Activated CD8-positive, alpha-beta T cell treated with anti-CD3 and anti-CD28 coated beads for 36 hours (primary cell): ENCODE measurements at regions of chr6 and their contacts with region 1.

Region 1: DNA sequence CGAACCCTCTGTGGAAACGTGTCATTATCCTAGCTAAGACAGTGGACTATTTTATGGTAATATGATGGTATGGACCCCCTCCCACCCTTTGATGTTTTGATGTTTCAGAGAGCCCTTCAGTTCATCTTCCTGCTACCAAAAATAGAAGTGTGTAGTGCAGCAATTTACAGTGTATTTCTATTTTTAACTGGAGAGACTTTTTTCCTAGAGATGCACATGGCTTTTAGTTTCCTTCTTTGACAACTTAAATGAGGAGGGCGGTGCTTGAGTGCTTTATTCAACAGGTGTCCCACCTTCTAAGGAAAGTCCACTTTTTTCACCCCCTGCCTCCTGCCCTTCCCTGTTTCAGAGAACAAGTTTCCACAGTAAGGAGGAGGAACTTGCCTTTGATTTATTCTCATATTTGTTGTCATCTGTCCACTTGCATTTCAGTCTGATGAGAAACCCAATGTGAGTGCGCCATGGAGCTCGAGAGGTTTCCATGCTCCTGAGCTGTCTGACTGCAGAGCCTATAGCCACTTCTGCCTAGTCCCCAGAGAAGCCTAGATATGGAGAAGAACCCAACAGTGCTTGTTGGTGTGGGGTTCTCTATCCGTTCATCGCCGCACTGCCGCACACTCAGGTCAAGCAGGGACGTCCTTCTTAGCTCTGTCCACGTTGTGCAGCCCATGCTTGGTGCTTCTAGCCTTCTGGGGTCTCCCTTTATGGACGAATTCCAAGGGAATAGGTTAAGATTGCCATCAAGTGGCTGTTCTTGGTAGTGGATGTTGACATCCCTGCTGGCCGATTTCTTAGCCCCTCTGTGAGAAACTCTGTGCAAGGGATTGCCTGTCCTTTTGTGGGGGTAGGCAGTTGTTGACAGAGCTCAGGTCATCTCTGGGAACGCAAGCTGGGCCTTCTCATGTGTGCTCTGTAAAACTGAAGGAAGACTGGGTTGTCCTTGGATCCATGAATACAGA is 144.2 kb downstream of the JARID2 start:
- DNase-seq: peak; percentile 44
- ATAC-seq: peak; percentile 27
- H3K4me3 Mint-ChIP-seq: peak overlapping the region; percentile 22
- H3K27ac Mint-ChIP-seq: peak overlapping the region; percentile 65
- H3K4me1 Mint-ChIP-seq: peaks cover 74% of the 10 kb centered on the region
- H3K27me3 Mint-ChIP-seq: no peaks in the 10 kb centered on the region
- CTCF ChIP-seq: peak; percentile 54

Region 2: DNA sequence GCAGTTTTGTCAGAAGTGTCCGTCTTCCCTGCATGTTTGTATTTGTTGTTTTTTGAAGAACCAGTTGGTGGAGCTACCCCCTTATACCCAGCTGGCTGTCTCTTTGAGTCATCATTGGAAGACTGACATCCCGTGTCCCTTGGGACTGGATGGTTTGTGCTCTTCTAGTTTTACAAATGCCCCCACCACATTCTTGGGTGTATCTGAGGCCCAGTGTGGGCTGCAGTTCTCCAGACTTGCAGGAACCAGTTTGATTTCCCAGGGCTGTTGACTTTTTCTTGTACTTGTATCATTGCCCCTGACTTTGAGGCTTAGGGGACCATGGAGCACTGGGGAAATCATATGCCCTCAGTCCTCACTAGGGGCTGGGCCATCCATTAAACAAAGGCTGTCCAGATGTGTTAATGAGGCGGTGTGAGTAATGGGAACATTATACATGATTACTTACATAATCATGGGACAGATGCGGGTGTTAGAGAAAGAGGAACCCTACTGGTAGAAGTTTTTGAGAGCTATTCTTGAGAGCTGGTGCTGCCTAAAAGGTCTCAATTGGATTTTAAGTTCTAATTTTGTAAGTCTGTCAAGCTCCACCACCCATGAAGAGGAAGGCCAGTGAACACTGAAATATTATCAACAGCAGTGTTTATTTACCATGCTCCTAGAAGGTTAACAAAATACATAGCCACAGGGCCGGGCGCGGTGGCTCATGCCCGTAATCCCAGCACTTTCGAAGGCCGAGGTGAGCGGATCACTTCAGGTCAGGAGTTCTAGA is 135.8 kb before region 1 on chr6:
- CTCF ChIA-PET with region 1: interaction called, 4 read pairs
- POLR2A ChIA-PET with region 1: interaction called, 3 read pairs
- intact Hi-C with region 1: loop called (anchors 10 kb)
- DNase-seq: no peak
- ATAC-seq: no peak
- H3K4me3 Mint-ChIP-seq: peak overlapping the region; percentile 55
- H3K27ac Mint-ChIP-seq: peak overlapping the region; percentile 88
- H3K4me1 Mint-ChIP-seq: peaks cover 97% of the 10 kb centered on the region
- H3K27me3 Mint-ChIP-seq: no peaks in the 10 kb centered on the region
- CTCF ChIP-seq: no peak

Region 3: GRCh38 chr6:15378866-15379265 is 11.2 kb before region 1 on chr6:
- CTCF ChIA-PET with region 1: interaction called, 28 read pairs
- POLR2A ChIA-PET with region 1: interaction called, 3 read pairs
- intact Hi-C with region 1: no loop called
- DNase-seq: no peak
- ATAC-seq: no peak
- H3K4me3 Mint-ChIP-seq: no peak overlapping the region
- H3K27ac Mint-ChIP-seq: no peak overlapping the region
- H3K4me1 Mint-ChIP-seq: peaks cover 48% of the 10 kb centered on the region
- H3K27me3 Mint-ChIP-seq: no peaks in the 10 kb centered on the region
- CTCF ChIP-seq: no peak

Region 4: GRCh38 chr6:15402406-15403045 is 12.5 kb after region 1 on chr6:
- CTCF ChIA-PET with region 1: interaction called, 14 read pairs
- POLR2A ChIA-PET with region 1: no interaction called
- intact Hi-C with region 1: no loop called
- DNase-seq: no peak
- ATAC-seq: no peak
- H3K4me3 Mint-ChIP-seq: no peak overlapping the region
- H3K27ac Mint-ChIP-seq: peak overlapping the region; percentile 73
- H3K4me1 Mint-ChIP-seq: peaks cover 87% of the 10 kb centered on the region
- H3K27me3 Mint-ChIP-seq: no peaks in the 10 kb centered on the region
- CTCF ChIP-seq: no peak

Region 5: GRCh38 chr6:15409301-15410125 is 19.5 kb after region 1 on chr6:
- CTCF ChIA-PET with region 1: interaction called, 15 read pairs
- POLR2A ChIA-PET with region 1: interaction called, 3 read pairs
- intact Hi-C with region 1: no loop called
- DNase-seq: no peak
- ATAC-seq: no peak
- H3K4me3 Mint-ChIP-seq: no peak overlapping the region
- H3K27ac Mint-ChIP-seq: peak overlapping the region; percentile 86
- H3K4me1 Mint-ChIP-seq: peaks cover 86% of the 10 kb centered on the region
- H3K27me3 Mint-ChIP-seq: no peaks in the 10 kb centered on the region
- CTCF ChIP-seq: no peak